ENCODE measurements at regions of chr1 and their contacts with region 1.

Region 1: GRCh38 chr1:153192697-153193096 is 10.5 kb upstream of the LELP1 start:
- DNase-seq: peak in 1 of 2 experiments; percentile 78
- H3K4me3 ChIP-seq: no peak overlapping the region
- H3K27ac ChIP-seq: no peak overlapping the region
- H3K4me1 ChIP-seq: 0 out of 7 replicates have a peak, but pooled peaks cover 0 to 2% (median 0%) of the 10 kb centered on the region in 4 experiments
- H3K27me3 ChIP-seq: no peaks in the 10 kb centered on the region
- CTCF ChIP-seq: peak; percentile 84 to 91 (median 84)
- EP300 ChIP-seq: no peak
- POLR2A ChIP-seq: no peak
- RAD21 ChIP-seq: peak; percentile 96 to 97

Region 2: GRCh38 chr1:152869808-152870419 is 322.8 kb before region 1 on chr1:
- CTCF ChIA-PET with region 1: interaction called, 200 read pairs
- POLR2A ChIA-PET with region 1: interaction called, 4 read pairs
- DNase-seq: peak in 1 of 2 experiments; percentile 80
- H3K4me3 ChIP-seq: no peak overlapping the region
- H3K27ac ChIP-seq: no peak overlapping the region
- H3K4me1 ChIP-seq: no peaks in the 10 kb centered on the region; a peak in 1 of 7 replicates
- H3K27me3 ChIP-seq: no peaks in the 10 kb centered on the region
- CTCF ChIP-seq: peak; percentile 78 to 86 (median 81)
- EP300 ChIP-seq: no peak
- POLR2A ChIP-seq: no peak
- RAD21 ChIP-seq: peak; percentile 71 to 74

Region 3: GRCh38 chr1:152946248-152946647 is 246.4 kb before region 1 on chr1:
- CTCF ChIA-PET with region 1: interaction called, 11 read pairs
- POLR2A ChIA-PET with region 1: no interaction called
- DNase-seq: no peak
- H3K4me3 ChIP-seq: no peak overlapping the region
- H3K27ac ChIP-seq: no peak overlapping the region
- H3K4me1 ChIP-seq: no peaks in the 10 kb centered on the region
- H3K27me3 ChIP-seq: no peaks in the 10 kb centered on the region
- CTCF ChIP-seq: no peak
- EP300 ChIP-seq: no peak
- POLR2A ChIP-seq: no peak
- RAD21 ChIP-seq: no peak

Region 4: DNA sequence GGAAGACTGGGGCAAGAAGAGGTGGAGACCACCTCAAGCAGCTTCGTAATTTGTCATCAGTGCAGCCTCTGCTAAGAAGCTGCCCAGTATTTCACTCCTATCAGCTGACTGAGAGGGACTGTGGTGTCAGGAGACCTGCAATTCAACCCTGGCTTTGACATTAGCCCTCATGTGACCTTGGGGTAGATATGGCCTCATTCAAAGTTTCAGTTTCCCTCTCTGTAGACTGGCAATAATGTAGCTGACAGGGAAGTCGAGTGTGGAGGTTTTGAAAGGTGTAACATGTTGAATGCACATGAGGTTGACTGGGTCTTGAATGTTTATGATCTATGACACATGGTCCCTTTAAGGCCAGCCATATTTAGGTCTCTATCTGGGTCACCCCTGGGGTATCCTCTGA is 224.4 kb before region 1 on chr1:
- CTCF ChIA-PET with region 1: interaction called, 114 read pairs
- POLR2A ChIA-PET with region 1: no interaction called
- DNase-seq: no peak
- H3K4me3 ChIP-seq: no peak overlapping the region
- H3K27ac ChIP-seq: no peak overlapping the region
- H3K4me1 ChIP-seq: no peaks in the 10 kb centered on the region
- H3K27me3 ChIP-seq: no peaks in the 10 kb centered on the region
- CTCF ChIP-seq: no peak
- EP300 ChIP-seq: no peak
- POLR2A ChIP-seq: no peak
- RAD21 ChIP-seq: no peak

Region 5: GRCh38 chr1:153220606-153221303 is 28.1 kb after region 1 on chr1:
- CTCF ChIA-PET with region 1: interaction called, 45 read pairs
- POLR2A ChIA-PET with region 1: no interaction called
- DNase-seq: no peak
- H3K4me3 ChIP-seq: no peak overlapping the region
- H3K27ac ChIP-seq: no peak overlapping the region
- H3K4me1 ChIP-seq: no peaks in the 10 kb centered on the region
- H3K27me3 ChIP-seq: no peaks in the 10 kb centered on the region; a peak in 2 of 7 replicates
- CTCF ChIP-seq: no peak
- EP300 ChIP-seq: no peak
- POLR2A ChIP-seq: no peak
- RAD21 ChIP-seq: no peak

Region 6: DNA sequence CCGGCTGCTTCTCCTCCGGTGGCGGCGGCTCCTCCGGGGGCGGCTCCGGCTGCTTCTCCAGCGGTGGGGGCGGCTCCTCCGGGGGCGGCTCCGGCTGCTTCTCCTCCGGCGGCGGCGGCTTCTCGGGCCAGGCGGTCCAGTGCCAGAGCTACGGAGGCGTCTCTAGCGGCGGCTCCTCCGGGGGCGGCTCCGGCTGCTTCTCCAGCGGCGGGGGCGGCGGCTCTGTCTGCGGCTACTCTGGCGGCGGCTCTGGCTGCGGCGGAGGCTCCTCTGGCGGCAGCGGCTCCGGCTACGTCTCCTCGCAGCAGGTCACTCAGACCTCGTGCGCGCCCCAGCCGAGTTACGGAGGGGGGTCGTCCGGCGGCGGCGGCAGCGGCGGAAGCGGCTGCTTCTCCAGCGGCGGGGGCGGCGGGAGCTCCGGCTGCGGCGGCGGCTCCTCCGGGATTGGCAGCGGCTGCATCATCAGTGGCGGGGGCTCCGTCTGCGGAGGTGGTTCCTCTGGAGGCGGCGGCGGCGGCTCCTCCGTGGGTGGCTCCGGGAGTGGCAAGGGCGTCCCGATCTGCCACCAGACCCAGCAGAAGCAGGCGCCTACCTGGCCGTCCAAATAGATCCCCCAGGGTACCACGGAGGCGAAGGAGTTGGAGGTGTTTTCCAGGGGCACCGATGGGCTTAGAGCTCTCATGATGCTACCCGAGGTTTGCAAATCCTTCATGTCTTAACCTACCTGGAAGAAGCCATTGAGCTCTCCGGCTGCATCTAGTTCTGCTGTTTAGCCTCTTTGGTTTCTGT is 68.8 kb after region 1 on chr1:
- CTCF ChIA-PET with region 1: no interaction called
- POLR2A ChIA-PET with region 1: no interaction called
- DNase-seq: peak in 1 of 2 experiments; percentile 74
- H3K4me3 ChIP-seq: peak overlapping the region; percentile 46 to 65 (median 50)
- H3K27ac ChIP-seq: no peak overlapping the region
- H3K4me1 ChIP-seq: 0 out of 7 replicates have a peak, but pooled peaks cover 0 to 3% (median 0%) of the 10 kb centered on the region in 4 experiments
- H3K27me3 ChIP-seq: peaks cover 8 to 49% (median 38%) of the 10 kb centered on the region in 4 experiments
- CTCF ChIP-seq: no peak
- EP300 ChIP-seq: no peak
- POLR2A ChIP-seq: no peak
- RAD21 ChIP-seq: no peak